Posterior vena cava (tissue), 2 donors: ENCODE measurements at regions of chr21 and their contacts with region 1.

Region 1: DNA sequence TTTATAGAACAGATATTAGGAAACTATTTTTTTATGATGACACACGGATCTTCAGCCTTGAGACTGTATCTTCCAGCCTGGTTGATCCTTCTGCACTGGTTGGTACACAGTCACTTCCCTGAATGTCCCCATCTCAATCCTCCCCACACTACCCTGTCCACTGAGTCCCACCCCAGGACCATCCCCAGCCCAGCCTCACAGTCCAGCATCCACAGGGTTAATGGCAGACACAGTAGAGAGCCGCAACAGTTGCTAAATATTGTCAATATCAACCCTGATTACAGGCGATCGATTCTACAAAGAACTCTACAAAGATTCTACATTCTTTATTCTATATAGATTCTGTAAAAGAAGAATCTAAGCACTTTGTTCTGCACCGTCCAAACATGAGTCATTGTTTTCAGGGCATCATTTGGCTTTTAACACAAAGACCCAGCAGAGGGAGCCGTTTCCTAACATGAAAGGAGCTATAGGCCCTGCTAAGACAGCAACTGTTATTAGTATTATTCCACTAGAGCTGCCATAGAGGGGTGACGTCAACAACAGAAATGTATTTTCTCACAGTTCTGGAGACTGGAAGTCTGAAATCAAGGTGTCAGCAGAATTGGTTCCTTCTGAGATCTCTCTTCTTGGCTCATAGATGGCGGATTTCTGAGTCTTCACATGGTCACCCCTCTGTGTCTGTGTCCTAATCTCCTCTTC is 30.1 kb upstream of the IFNAR2 start:
- DNase-seq: no peak

Region 2: DNA sequence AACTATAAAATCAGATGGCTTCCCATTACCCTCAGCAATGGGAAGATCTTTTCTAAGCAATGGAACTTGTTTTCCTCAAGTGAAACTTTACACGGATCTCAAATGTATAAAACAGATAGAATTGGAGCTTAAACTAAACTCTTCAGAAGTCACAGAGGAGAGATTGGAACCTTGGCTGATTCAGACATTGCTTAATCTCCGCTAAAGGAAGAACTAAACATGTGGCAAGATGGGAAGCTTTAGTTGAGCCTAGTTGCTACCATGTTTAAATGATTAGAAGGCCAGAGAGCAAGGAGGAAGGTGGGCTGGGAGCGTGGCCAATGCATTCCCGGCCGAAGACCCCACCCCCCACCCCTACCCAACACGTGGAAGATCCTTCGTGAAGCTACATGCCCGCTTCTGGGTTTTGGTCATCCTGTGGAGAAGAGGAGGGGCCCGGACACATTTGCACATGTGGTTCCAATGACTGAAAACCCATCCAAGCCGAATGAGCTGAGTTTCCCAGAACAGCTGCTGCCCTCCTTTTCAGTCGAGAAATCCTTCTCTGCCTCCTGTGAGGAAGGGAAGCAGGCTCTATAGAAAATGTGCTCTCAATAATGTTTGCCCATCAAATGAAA is 1085.1 kb before region 1 on chr21:
- intact Hi-C with region 1: no loop called
- DNase-seq: no peak

Region 3: GRCh38 chr21:33380483-33380998 is 180.9 kb after region 1 on chr21:
- intact Hi-C with region 1: loop called in 1 of 2 experiments (anchors 10 kb)
- DNase-seq: peak; percentile 98

Region 4: GRCh38 chr21:33449616-33450015 is 249.9 kb after region 1 on chr21:
- intact Hi-C with region 1: loop called in 1 of 2 experiments (anchors 5 kb)
- DNase-seq: no peak